ENCODE measurements at regions of chr6 and their contacts with region 1.

Region 1: DNA sequence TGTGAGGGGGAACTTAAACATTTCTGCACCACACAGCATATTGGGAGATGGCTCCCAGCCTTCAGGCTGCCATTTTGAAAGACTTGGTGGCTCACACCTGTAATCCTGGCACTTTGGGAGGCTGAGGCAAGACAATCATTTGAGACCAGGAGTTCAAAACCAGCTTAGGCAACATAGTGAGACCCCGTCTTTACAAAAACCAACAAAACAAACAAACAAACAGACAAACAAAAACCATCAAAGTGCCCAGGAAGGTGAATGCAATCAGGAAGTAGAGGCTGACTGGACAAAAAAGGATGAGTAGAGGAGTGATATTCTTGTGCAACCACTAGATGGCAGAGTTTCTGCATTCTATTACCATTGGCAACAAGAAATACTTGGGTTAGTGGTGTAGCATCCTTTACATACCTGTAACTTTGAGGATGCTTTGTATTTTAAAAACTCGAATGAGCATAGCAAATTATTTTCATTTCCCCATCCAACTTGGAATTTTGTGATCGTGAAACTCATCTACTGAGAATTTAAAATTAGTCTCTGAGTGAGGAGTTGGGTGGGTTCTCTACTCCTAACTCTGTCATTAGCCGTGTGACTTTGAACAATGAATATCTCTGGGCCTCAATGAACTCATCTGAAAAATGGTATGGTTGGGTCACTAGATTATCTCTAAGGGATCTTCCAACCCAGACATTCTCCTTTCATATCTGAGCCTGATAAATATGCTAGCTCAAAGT is 84.4 kb downstream of the CRYBG1 start:
- DNase-seq: peak; percentile 26
- H3K4me3 Mint-ChIP-seq: no peak overlapping the region
- H3K27ac Mint-ChIP-seq: no peak overlapping the region
- H3K4me1 Mint-ChIP-seq: peaks cover 17% of the 10 kb centered on the region
- H3K27me3 Mint-ChIP-seq: peaks cover 23% of the 10 kb centered on the region

Region 2: DNA sequence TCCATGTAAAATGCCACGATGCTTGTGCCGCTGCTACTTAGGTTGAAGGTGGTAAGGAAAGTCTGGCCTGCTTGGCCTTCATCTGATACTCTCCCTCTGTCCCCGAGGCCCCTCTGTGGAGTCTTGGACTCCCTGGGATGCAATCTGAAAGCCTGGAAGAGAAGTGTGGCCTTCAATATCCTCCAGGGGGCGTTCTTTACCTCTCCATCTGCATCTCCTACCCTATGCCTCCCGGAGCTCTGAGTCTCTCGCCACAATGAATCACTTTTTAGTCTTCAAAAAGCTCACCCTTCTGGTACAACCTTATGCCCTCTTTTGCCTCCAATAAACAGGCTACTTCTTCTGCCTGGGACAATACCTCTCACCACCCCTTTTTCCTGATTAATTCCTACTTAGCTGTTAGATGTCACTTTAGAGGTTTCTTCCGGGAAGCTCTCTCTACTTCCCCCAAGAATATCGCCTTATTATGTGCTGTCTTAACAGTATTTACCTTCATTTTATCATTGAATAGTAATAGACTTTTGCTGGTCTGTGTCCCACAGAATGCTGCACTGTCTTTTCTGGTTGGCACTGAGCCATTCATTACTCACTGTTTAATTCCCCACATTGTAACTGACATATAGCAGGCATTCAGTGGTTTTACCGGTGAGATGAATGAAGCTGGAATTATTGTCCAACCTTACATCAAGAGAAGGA is 105.5 kb before region 1 on chr6:
- CTCF ChIA-PET with region 1: interaction called, 66 read pairs
- DNase-seq: peak; percentile 57
- H3K4me3 Mint-ChIP-seq: no peak overlapping the region
- H3K27ac Mint-ChIP-seq: no peak overlapping the region
- H3K4me1 Mint-ChIP-seq: peaks cover 2% of the 10 kb centered on the region
- H3K27me3 Mint-ChIP-seq: peaks cover 30% of the 10 kb centered on the region

Region 3: GRCh38 chr6:106431972-106432371 is 13.0 kb before region 1 on chr6:
- CTCF ChIA-PET with region 1: no interaction called
- DNase-seq: no peak
- H3K4me3 Mint-ChIP-seq: no peak overlapping the region
- H3K27ac Mint-ChIP-seq: no peak overlapping the region
- H3K4me1 Mint-ChIP-seq: no peaks in the 10 kb centered on the region
- H3K27me3 Mint-ChIP-seq: peaks cover 13% of the 10 kb centered on the region

Region 4: GRCh38 chr6:106556368-106556960 is 111.5 kb after region 1 on chr6:
- CTCF ChIA-PET with region 1: interaction called, 157 read pairs
- DNase-seq: no peak
- H3K4me3 Mint-ChIP-seq: no peak overlapping the region
- H3K27ac Mint-ChIP-seq: no peak overlapping the region
- H3K4me1 Mint-ChIP-seq: peaks cover 4% of the 10 kb centered on the region
- H3K27me3 Mint-ChIP-seq: no peaks in the 10 kb centered on the region

Region 5: GRCh38 chr6:106569428-106569827 is 124.5 kb after region 1 on chr6:
- CTCF ChIA-PET with region 1: interaction called, 157 read pairs
- DNase-seq: no peak
- H3K4me3 Mint-ChIP-seq: no peak overlapping the region
- H3K27ac Mint-ChIP-seq: no peak overlapping the region
- H3K4me1 Mint-ChIP-seq: no peaks in the 10 kb centered on the region
- H3K27me3 Mint-ChIP-seq: no peaks in the 10 kb centered on the region

Region 6: GRCh38 chr6:106979427-106979884 is 534.5 kb after region 1 on chr6:
- CTCF ChIA-PET with region 1: interaction called, 24 read pairs
- DNase-seq: peak; percentile 86
- H3K4me3 Mint-ChIP-seq: no peak overlapping the region
- H3K27ac Mint-ChIP-seq: no peak overlapping the region
- H3K4me1 Mint-ChIP-seq: peaks cover 4% of the 10 kb centered on the region
- H3K27me3 Mint-ChIP-seq: peaks cover 48% of the 10 kb centered on the region